PC-3 (cell line): ENCODE measurements at regions of chr6 and their contacts with region 1.

Region 1: DNA sequence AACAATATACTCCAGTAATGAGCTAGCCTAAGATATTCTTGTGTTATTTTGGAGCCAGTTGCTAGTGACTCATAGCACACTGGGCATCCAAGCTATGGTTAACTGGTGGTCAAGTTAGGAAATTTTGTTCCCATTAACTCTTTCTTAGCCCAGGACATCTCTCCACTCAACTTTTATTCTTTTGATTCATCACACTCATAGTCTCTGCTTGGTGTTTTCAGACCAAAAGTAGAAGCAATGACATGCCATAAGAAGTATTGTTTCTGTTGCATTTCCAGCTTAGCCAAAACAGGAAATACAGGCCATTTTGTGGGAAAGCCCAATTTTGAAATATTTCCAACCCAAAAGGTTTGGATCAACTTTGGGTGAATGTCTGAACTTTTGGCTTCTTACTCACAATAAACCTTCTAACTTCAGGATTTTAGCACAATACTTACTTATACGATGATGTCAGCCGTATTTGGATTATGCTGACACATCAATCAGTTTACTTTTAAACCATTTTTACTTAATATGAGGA is 31.6 kb upstream of the CCN2 start:
- DNase-seq: peak; percentile 47
- ATAC-seq: peak; percentile 61
- H3K4me3 ChIP-seq: no peak overlapping the region
- H3K27ac ChIP-seq: peak overlapping the region; percentile 76
- H3K4me1 ChIP-seq: peaks cover 29% of the 10 kb centered on the region
- H3K27me3 ChIP-seq: no peaks in the 10 kb centered on the region
- CTCF ChIP-seq: no peak

Region 2: DNA sequence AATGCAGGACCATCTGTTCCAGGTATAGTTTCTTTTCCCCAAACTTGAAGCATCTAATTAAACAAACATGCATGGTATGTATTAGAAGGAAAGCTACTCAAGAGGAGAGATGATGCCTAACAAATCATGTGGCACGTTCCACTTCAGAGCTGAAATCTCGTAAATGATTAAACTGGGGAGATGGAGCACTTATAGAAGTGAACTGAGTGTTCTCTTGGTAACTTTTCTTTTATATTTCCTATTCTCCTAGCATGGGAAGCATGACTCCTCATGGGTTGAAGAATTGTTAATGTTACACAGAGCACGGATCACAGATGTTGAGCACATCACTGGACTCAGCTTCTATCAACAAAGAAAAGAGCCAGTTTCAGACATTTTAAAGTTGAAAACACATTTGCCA is 92.7 kb before region 1 on chr6:
- CTCF ChIA-PET with region 1: no interaction called
- POLR2A ChIA-PET with region 1: no interaction called
- intact Hi-C with region 1: no loop called
- DNase-seq: no peak
- ATAC-seq: no peak
- H3K4me3 ChIP-seq: no peak overlapping the region
- H3K27ac ChIP-seq: no peak overlapping the region
- H3K4me1 ChIP-seq: peaks cover 7% of the 10 kb centered on the region
- H3K27me3 ChIP-seq: no peaks in the 10 kb centered on the region
- CTCF ChIP-seq: no peak

Region 3: DNA sequence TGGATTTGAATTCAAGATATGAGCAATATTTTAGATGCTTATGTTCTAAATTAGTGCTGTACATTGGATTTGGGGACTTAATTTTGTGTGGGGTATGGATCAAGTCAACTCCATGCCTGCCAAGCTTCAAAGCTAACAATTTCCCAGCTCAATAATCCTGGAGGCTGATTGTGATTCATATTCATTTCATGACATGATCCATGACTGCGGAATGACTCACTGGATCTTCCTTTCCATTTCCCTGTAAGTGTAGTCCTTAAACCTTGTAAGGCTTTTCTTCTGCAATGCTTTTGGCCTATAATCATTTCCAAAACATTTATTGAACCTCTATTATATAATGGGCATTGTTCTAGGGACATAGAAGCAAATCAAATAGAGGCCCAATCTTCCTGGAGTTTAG is 13.1 kb after region 1 on chr6:
- CTCF ChIA-PET with region 1: no interaction called
- POLR2A ChIA-PET with region 1: interaction called, 3 read pairs
- intact Hi-C with region 1: loop called (anchors 2 kb)
- DNase-seq: peak; percentile 87
- ATAC-seq: peak; percentile 94
- H3K4me3 ChIP-seq: no peak overlapping the region
- H3K27ac ChIP-seq: peak overlapping the region; percentile 60
- H3K4me1 ChIP-seq: peaks cover 17% of the 10 kb centered on the region
- H3K27me3 ChIP-seq: no peaks in the 10 kb centered on the region
- CTCF ChIP-seq: no peak

Region 4: DNA sequence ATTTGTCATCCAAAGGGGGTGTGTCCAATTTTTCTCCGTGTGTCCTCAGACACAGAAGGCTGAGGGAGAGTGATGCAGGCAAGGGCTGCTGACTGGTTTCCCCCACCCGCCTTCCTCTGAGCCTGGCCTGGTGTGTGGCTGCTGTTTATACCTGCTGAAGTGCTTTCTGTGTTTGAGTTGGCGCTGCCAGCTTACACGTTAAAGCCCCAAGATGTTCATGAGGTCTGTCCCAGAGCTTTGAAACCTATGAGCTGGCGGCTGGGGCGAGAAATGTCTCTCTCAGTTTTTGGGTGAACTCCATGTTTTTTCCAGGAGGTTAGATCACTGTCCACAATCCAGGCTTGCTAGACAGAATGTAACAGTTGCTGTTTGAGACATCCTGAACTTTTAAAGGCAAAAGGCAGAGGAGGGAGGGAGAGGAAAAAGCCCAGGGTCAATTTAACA is 37.4 kb after region 1 on chr6:
- CTCF ChIA-PET with region 1: no interaction called
- POLR2A ChIA-PET with region 1: no interaction called
- intact Hi-C with region 1: loop called (anchors 2 kb)
- DNase-seq: no peak
- ATAC-seq: peak; percentile 31; the same call in 1 of the 2 replicates
- H3K4me3 ChIP-seq: no peak overlapping the region
- H3K27ac ChIP-seq: no peak overlapping the region
- H3K4me1 ChIP-seq: peaks cover 6% of the 10 kb centered on the region
- H3K27me3 ChIP-seq: no peaks in the 10 kb centered on the region
- CTCF ChIP-seq: no peak